HAP-1 (cell line): ENCODE measurements at regions of chr5 and their contacts with region 1.

Region 1: GRCh38 chr5:142699184-142699720 is 13.4 kb upstream of the FGF1 start:
- DNase-seq: peak; percentile 73 to 90
- H3K4me3 ChIP-seq: no peak overlapping the region
- H3K4me1 ChIP-seq: peaks cover 4% of the 10 kb centered on the region
- H3K27me3 ChIP-seq: no peaks in the 10 kb centered on the region

Region 2: DNA sequence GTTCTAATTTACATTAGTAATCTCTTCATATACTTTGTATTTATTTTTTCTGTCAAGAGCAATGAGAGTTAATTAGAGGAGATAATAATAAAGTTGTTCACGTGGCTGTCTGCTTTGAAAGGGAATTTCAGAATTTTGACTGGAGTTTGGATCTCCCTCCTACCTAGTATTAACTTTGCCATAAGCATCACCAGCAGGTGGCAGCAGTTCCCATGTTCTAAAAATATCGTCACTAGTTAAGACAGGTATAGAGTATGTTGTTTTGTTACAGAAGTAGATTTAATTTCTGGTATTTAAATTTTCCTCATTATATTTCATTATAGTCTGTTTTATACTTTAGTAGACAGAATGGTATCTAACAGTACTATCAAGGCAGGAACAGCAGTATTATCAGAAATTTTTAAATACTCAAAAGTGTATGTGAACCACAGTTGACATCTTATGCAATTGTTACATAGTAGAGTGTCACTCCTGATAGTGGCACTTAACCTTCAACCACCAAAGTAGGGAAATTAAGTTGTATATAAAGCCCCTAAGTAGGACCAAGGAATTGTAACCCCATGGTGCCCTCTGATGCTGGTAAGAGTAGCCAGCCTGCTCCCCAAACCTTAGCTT is 706.8 kb before region 1 on chr5:
- in situ Hi-C with region 1: loop called (anchors 25 kb)
- DNase-seq: peak; percentile 36 to 83
- H3K4me3 ChIP-seq: no peak overlapping the region
- H3K4me1 ChIP-seq: no peaks in the 10 kb centered on the region
- H3K27me3 ChIP-seq: no peaks in the 10 kb centered on the region

Region 3: DNA sequence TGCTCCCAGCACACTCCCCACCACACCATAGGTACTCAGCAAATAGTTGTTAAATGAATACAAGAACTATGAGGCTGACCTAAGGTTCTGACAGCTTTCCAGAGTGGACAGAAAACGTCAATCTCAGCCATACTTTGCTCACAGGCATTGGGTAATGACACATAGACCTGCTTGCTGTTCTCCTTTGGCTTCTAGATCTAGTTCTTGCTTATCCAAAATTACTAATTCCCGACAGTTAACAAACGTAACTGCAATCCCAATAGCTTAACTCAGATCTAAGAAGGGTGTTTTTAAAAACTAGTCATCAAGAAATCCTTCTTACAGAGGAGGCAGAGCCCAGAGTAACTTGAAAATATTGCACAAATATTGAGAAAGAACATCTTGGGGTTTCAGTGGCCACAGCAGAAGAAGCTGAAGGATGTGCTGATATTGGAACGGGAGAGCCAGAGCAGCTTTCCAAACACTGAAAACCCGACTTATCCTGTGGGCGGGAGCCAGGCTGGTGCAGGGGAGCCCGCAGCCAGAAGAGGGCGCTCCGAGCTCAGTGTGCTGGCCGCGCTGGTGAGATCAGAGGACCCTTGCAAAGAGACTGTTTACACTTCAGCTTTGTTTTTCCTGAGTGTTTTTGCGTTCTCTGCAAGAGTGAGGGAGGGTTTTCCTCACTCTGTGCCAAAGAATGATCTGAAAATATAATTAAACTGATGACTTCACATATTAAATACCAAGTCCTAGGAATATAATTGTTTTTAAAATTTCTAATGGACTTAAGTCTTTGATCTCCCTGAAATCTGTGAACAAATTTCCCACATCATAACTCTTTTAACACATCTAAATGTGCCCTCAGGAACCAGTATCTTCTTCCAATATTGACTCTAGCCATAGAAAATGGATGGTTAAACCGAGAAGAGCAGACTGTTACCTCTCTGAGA is 43.6 kb before region 1 on chr5:
- in situ Hi-C with region 1: loop called (anchors 5 kb)
- DNase-seq: peak; percentile 71 to 89
- H3K4me3 ChIP-seq: no peak overlapping the region
- H3K4me1 ChIP-seq: no peaks in the 10 kb centered on the region
- H3K27me3 ChIP-seq: peaks cover 5% of the 10 kb centered on the region; the same call in 1 of the 2 replicates